Mammary epithelial cell (primary cell): ENCODE measurements at regions of chr5 and their contacts with region 1.

Region 1: GRCh38 chr5:65198456-65199120 is 283.1 kb downstream of the ADAMTS6 start:
- DNase-seq: peak; percentile 99
- H3K4me3 ChIP-seq: no peak overlapping the region
- H3K27ac ChIP-seq: peak overlapping the region; percentile 98
- H3K4me1 ChIP-seq: peaks cover 53% of the 10 kb centered on the region
- H3K27me3 ChIP-seq: no peaks in the 10 kb centered on the region
- CTCF ChIP-seq: no peak

Region 2: GRCh38 chr5:64958757-64959391 is 239.7 kb before region 1 on chr5:
- CTCF ChIA-PET with region 1: no interaction called
- dilution Hi-C with region 1: no loop called
- in situ Hi-C with region 1: no loop called
- intact Hi-C with region 1: loop called (anchors 2 kb)
- DNase-seq: no peak
- H3K4me3 ChIP-seq: no peak overlapping the region
- H3K27ac ChIP-seq: no peak overlapping the region
- H3K4me1 ChIP-seq: no peaks in the 10 kb centered on the region
- H3K27me3 ChIP-seq: no peaks in the 10 kb centered on the region
- CTCF ChIP-seq: peak; percentile 45 to 51

Region 3: DNA sequence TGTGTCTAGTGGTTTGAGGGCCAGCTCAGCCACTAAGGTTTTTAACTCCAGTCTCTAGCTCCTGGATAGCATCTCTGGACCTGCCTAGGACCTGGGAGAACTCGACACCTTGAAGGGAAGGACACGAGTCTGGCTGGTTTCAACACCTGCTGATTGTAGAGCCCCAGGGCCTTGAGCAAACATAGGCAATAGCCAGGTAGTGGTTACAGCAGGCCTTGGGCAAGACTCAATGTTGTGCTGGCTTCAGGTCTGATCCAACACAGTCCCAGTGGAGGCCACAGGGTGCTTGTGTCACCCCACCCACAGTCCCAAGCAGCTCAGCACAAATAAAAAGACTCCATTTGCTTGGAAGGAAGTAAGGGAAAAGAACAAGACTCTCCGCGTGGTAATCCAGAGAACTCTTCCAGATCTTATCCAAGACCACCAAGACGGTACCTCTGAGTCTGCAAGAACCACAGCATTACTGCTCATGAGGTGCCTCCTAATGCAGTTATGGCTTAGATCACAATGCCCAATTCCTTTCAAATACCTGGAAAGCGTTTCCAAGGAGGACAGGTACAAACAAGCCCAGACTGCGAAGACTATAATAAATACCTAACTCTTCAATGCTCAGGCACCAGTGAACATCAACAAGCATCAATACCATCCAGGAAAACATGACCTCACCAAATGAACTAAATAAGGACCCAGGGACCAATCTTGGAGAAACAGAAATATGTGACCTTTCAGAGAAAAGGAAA is 104.5 kb before region 1 on chr5:
- CTCF ChIA-PET with region 1: no interaction called
- dilution Hi-C with region 1: no loop called
- in situ Hi-C with region 1: no loop called
- intact Hi-C with region 1: no loop called
- DNase-seq: peak; percentile 49
- H3K4me3 ChIP-seq: no peak overlapping the region
- H3K27ac ChIP-seq: peak overlapping the region; percentile 16
- H3K4me1 ChIP-seq: peaks cover 16% of the 10 kb centered on the region
- H3K27me3 ChIP-seq: no peaks in the 10 kb centered on the region
- CTCF ChIP-seq: no peak